Sigmoid colon (tissue), 7 donors: ENCODE measurements at regions of chr7 and their contacts with region 1.

Region 1: DNA sequence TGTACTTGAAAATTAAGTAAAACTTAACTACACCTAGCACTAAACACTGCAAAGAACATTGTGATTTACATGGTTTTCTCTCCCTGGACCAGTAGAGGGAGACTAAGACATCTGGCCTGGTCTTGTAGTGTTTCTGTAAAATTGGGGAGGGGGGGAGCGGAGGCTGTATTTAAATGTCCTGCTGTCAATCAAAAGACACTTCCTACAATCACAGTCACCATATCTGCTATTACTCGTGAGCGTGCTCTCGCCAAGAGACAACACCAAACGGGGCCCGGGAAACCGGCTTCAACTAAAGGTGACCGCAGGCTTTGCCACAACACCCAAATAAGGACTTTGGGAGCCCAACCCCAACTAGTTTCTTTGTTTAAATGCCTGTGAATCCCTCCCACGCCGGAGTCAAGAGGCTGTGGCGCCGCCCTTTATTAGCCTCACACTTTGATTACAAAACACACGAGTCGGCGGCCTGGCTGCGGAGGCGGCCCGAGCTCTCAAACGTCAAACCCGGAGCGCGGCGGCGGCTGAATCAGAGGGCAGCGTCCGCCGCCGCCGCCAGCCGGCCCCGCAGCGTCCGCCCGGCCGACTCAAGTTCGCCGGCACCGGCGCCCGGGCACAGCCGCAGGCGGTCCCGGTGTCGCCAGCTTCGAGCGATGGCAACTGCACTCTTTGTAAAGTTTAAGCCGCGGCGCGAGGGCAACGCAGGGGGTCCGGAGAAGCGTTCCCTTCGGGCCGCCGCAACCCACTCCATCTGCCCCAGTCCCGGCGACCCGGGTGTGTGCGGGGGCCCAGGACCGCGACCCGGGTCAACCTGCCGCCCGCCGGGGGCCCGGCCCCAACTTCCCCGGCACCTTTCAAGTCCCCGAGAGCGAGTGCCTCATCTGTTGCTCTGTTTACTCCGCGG is 1.3 kb downstream of the KDM7A start:
- DNase-seq: peak; percentile 97
- H3K4me3 ChIP-seq: peak overlapping the region; percentile 75 to 97 (median 81)
- H3K27ac ChIP-seq: peak overlapping the region; percentile 95 to 100 (median 100)
- H3K4me1 ChIP-seq: peaks cover 0 to 29% (median 23%) of the 10 kb centered on the region in 4 donors
- H3K27me3 ChIP-seq: no peaks in the 10 kb centered on the region
- CTCF ChIP-seq: peak; percentile 76 to 95 (median 84)
- EP300 ChIP-seq: peak in 1 of 4 donors; percentile 14
- POLR2A ChIP-seq: peak; percentile 63 to 76

Region 2: GRCh38 chr7:138459413-138460175 is 1715.9 kb before region 1 on chr7:
- intact Hi-C with region 1: loop called (anchors 10 kb)
- DNase-seq: peak; percentile 98
- H3K4me3 ChIP-seq: peak overlapping the region; percentile 6 to 94 (median 56)
- H3K27ac ChIP-seq: peak overlapping the region; percentile 42 to 95 (median 71)
- H3K4me1 ChIP-seq: peaks cover 0 to 15% (median 8%) of the 10 kb centered on the region in 4 donors
- H3K27me3 ChIP-seq: no peaks in the 10 kb centered on the region
- CTCF ChIP-seq: peak; percentile 13 to 74 (median 27)
- EP300 ChIP-seq: no peak
- POLR2A ChIP-seq: no peak

Region 3: DNA sequence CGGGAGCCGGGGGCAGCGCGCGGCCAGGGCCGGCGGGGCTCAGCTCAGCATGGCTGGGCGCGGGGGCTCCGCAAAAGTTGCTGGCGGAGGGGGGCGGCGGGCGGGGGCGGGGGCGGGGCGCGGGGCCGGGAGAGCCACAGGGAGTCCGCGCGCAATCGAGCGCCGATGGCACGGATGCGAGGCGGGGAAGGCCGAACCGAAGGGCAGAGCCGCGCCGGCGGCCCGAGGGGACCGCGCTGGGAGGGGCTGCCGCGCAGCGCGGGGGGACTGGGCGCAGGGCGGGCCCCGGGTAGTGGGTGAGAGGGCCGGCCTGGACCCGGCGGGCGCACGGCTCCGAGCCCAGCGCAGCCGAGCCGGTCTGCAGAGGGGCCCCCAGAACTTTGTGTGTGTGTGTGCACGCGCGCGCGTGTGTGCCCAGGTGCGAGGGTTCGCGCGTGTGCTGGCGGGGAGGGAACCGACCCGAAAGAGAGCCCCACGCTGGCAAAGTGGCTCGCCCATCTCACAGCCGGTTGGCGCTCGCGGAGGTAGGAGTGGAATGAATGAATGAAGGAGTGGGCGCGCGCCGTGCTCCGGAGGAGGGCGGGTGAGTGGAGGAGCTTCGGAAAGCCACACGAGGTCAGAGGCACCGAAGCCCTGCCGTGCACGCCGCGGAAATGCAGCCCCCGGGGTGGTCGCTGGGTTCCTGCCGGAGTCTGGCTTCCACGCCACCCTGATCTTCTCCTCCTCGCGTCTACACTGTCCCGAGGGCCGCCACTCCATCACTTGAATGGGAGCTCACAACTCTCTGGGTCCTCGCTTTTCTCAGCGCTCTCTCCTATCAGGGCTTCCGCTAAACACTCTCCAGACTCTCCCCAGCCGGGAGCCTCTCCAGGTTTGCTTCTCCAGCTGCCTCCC is 397.3 kb before region 1 on chr7 and contains the start of gene HIPK2:
- intact Hi-C with region 1: loop called (anchors 10 kb)
- DNase-seq: peak; percentile 86
- H3K4me3 ChIP-seq: peak within 1 kb of the TSS; percentile 64 to 92 (median 90)
- H3K27ac ChIP-seq: peak within 1 kb of the TSS; percentile 89 to 95 (median 92)
- H3K4me1 ChIP-seq: peaks cover 0 to 21% (median 17%) of the 10 kb centered on the region in 4 donors
- H3K27me3 ChIP-seq: no peaks in the 10 kb centered on the region
- CTCF ChIP-seq: no peak
- EP300 ChIP-seq: no peak
- POLR2A ChIP-seq: no peak
- total RNA-seq, gene HIPK2: 7.8 to 11.6 (median 8.8) TPM

Region 4: GRCh38 chr7:140230861-140231770 is 55.6 kb after region 1 on chr7:
- intact Hi-C with region 1: loop called (anchors 2 kb)
- DNase-seq: peak; percentile 76
- H3K4me3 ChIP-seq: peak overlapping the region; percentile 31 to 60 (median 50)
- H3K27ac ChIP-seq: peak overlapping the region in 3 of 4 donors; percentile 41 to 56 (median 45)
- H3K4me1 ChIP-seq: peaks cover 0 to 24% (median 19%) of the 10 kb centered on the region in 4 donors
- H3K27me3 ChIP-seq: peaks cover 0 to 23% (median 0%) of the 10 kb centered on the region in 3 donors
- CTCF ChIP-seq: no peak
- EP300 ChIP-seq: no peak
- POLR2A ChIP-seq: peak in 1 of 2 donors; percentile 13

Region 5: DNA sequence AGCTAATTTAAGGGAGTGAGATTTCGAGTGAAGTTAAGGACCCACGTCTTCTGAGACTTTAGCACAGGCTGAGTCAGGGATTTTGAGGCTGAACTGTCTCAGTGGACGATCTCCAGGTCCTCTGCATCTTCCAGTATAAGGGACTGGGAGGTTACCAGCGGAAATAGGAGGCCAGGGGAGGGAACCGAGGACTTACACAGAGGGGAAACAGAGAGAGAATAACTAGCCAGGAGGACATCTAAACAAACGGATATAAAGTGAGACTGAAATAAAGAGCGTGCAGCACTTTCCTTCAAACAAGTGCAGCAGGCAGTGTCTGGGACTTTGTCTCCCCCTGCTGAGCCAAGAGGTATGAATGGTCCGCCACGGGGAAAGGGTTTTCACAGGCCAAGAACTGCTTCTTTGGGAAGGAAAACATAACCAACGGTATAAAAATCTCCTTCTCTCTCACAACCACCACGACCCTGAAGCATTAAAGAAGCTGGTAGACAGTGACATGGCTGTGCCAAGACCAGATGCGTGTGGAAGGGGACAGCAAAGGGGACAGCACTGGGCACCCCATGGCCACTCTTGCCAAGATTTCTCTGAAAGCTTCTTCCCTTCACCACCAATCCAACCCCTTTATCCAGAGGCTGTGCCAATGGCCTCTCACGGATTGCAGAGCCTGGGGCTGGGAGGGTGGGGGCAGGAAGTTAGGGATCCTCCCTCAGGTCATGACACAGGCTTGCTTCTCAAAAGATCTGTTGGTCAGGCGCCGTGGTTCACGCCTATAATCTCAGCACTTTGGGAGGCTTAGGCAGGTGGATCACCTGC is 150.9 kb after region 1 on chr7:
- intact Hi-C with region 1: loop called (anchors 2 kb)
- DNase-seq: peak; percentile 87
- H3K4me3 ChIP-seq: peak overlapping the region in 2 of 4 donors; percentile 15 to 18
- H3K27ac ChIP-seq: peak overlapping the region; percentile 47 to 71 (median 56)
- H3K4me1 ChIP-seq: peaks cover 0 to 38% (median 24%) of the 10 kb centered on the region in 4 donors
- H3K27me3 ChIP-seq: no peaks in the 10 kb centered on the region
- CTCF ChIP-seq: peak; percentile 36 to 70 (median 65)
- EP300 ChIP-seq: no peak
- POLR2A ChIP-seq: no peak

Region 6: DNA sequence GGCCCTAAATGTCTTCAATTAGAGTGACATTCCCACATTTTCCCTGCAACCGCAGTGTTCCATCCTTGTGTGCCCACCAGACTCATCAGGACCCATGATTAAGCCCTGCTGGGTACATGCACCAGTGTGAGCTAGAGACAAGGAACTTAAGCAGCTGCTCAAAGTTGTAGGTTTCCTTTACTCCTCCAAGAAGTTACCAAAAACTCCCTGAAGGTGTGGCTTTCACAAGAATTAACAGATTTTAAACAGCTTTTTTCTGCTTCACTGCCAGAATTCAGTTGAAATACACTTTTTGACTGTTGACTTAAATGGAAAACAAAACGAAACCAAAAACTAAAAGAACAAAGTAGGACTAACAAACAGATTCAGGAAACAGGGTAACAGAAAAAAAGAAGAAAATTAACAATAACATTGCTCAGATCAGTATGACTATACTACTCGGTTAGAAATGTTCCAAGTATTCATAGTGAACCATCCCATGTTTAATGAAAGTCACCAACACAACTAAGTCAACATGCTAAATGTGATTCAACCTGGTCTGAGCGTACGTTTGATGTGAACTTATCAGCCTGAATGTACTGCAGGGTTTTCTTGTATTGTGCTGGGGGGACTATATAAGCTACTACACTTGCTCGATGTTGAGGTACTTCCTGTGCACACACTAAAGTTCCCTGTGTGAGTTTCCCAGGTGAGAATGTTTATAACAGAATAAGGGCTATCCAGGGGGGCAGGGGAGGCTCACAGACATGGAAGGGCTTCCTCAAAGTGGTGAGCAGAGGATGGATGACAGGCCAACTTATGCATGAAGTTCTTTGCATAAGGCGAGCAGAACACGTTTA is 200.6 kb after region 1 on chr7:
- intact Hi-C with region 1: no loop called
- DNase-seq: no peak
- H3K4me3 ChIP-seq: no peak overlapping the region
- H3K27ac ChIP-seq: no peak overlapping the region
- H3K4me1 ChIP-seq: no peaks in the 10 kb centered on the region
- H3K27me3 ChIP-seq: no peaks in the 10 kb centered on the region
- CTCF ChIP-seq: no peak
- EP300 ChIP-seq: no peak
- POLR2A ChIP-seq: no peak

Region 7: DNA sequence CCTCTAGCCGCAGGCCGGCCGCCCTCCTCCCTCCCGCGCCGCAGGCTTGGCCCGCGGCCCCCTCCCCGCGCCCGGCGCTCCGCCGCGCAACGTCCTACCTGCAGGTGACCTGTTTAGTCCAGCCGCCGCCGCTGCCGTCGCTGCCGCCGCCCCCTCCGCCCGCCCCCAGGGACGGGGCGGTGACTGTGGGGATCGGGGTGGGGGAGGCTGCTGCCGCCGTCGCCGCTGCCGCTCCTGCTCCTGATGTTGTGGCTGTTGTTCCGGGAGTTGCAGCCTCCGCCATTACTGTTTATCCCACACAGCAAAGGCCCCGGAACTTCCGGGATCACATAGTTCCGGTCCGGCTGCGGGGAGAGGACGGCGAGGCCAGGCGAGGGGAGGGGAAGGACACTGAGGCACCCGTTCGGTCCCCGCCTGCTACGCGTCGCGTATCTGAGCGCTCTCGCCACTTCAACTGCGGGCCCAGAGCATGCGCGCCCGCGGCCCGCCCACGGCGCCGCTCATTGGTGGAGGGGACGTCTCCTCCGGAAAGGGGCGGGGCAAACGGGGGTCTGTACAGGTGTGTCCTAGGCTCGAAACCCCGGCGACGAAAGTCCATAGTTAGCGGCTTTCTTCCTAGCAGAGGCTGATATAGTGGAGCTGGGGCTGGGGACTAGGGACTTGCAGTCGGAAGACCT is 303.7 kb after region 1 on chr7 and contains the start of gene MKRN1:
- intact Hi-C with region 1: loop called (anchors 5 kb)
- DNase-seq: peak; percentile 96
- H3K4me3 ChIP-seq: peak within 1 kb of the TSS; percentile 86 to 99 (median 98)
- H3K27ac ChIP-seq: peak within 1 kb of the TSS; percentile 87 to 96 (median 90)
- H3K4me1 ChIP-seq: peaks cover 0 to 34% (median 22%) of the 10 kb centered on the region in 4 donors
- H3K27me3 ChIP-seq: no peaks in the 10 kb centered on the region
- CTCF ChIP-seq: no peak
- EP300 ChIP-seq: no peak
- POLR2A ChIP-seq: peak; percentile 47 to 79
- total RNA-seq, gene MKRN1: 63.5 to 73.7 (median 69.4) TPM